HAP-1 (cell line): ENCODE measurements at regions of chr16 and their contacts with region 1.

Region 1: GRCh38 chr16:23174622-23175021 is 7.9 kb upstream of the SCNN1G start:
- DNase-seq: peak in 1 of 2 experiments; percentile 23
- H3K4me3 ChIP-seq: no peak overlapping the region
- H3K4me1 ChIP-seq: no peaks in the 10 kb centered on the region
- H3K27me3 ChIP-seq: no peaks in the 10 kb centered on the region; the same call in 1 of the 2 replicates

Region 2: GRCh38 chr16:23428351-23428750 is 253.7 kb after region 1 on chr16:
- in situ Hi-C with region 1: loop called (anchors 5 kb)
- DNase-seq: no peak
- H3K4me3 ChIP-seq: no peak overlapping the region
- H3K4me1 ChIP-seq: peaks cover 4% of the 10 kb centered on the region; the same call in 1 of the 2 replicates
- H3K27me3 ChIP-seq: no peaks in the 10 kb centered on the region